ENCODE measurements at regions of chr17 and their contacts with region 1.

Region 1: DNA sequence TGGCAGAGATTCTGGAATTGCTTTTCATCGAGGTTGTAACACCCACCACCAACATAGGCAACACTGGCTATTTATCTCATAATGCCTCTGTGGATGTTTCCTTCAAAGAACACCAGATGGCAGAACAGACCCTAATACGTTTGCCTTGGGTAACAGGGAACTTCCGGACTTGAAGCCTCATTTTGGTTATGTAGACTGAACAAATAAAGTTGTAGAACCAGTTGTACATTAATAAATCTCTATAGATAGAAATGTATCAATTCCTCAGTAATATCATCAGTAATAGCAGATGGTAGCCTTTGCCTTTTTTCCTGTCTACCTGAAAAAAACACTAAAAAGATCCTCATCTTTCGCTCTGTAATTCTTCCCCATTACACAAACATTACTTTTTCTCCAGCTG is 25.9 kb upstream of the APOH start:
- DNase-seq: peak; percentile 56
- H3K4me3 Mint-ChIP-seq: peak overlapping the region; percentile 46
- H3K27ac Mint-ChIP-seq: peak overlapping the region; percentile 67
- H3K4me1 Mint-ChIP-seq: peaks cover 22% of the 10 kb centered on the region
- H3K27me3 Mint-ChIP-seq: no peaks in the 10 kb centered on the region

Region 2: DNA sequence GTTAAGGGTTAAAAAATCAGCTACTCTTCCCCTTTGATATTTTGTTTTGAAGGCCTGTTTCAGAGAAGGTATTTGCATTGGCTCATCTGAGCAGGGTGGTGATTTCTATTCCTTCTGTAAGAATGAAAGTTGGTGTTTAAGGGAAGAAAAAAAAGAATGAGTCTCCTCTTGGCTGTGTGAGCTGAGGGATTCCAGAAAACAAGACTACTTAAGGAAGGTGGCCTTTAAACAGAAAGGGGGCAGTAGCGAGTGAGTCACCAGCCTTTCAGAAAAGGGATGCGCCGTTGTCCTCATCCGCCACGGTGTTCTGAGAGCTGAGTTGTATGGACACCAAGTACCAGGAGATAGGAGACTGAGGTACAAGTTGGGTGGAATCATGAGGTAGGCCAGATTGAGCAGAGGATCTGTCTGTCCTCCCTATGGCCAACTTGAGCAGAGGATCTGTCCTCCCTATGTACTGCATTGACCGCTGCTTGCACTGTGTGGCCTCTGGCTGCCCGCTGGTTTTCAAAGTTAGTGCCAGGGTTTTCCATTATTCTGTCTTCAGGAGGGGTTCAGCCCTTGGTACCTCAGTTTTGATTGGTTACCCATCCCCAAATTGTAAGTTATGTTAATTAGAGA is 55.5 kb after region 1 on chr17:
- CTCF ChIA-PET with region 1: no interaction called
- intact Hi-C with region 1: loop called (anchors 1 kb)
- DNase-seq: peak; percentile 77
- H3K4me3 Mint-ChIP-seq: peak overlapping the region; percentile 25
- H3K27ac Mint-ChIP-seq: peak overlapping the region; percentile 94
- H3K4me1 Mint-ChIP-seq: peaks cover 90% of the 10 kb centered on the region
- H3K27me3 Mint-ChIP-seq: no peaks in the 10 kb centered on the region

Region 3: DNA sequence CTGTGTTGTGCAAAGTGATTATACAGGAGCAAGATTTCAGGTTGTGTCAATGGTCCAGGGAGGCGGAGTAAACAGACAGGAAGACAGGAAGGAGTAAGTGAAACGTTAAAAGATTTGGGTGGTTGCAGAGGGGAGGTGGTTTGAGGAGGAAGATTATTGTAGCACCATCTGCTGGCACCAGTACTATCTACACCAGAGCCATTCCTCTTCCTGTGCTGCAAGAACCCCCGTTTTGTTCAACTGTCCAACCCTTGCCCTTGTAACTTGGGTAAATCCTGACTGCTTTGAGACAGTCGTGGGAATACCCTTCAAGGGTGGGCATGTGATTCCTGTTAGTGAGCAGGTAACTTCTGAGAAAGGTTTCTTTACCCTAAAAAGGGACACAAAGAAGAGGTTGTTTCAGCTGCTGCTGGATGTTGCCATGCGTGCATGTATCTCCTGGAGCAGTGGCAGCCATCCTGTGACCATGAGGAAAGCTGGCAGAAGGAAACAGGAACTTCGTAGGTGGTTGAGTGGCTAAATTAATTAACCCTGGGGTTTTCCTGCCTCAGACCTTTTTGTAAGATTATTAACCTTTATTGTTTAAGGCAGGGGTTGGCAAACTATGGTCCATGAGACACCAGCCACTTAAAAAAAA is 171.4 kb after region 1 on chr17:
- CTCF ChIA-PET with region 1: interaction called, 5 read pairs
- intact Hi-C with region 1: loop called (anchors 1 kb)
- DNase-seq: peak; percentile 68
- H3K4me3 Mint-ChIP-seq: no peak overlapping the region
- H3K27ac Mint-ChIP-seq: peak overlapping the region; percentile 83
- H3K4me1 Mint-ChIP-seq: peaks cover 81% of the 10 kb centered on the region
- H3K27me3 Mint-ChIP-seq: no peaks in the 10 kb centered on the region

Region 4: GRCh38 chr17:66508896-66509843 is 254.1 kb after region 1 on chr17:
- CTCF ChIA-PET with region 1: no interaction called
- intact Hi-C with region 1: loop called (anchors 1 kb)
- DNase-seq: peak; percentile 79
- H3K4me3 Mint-ChIP-seq: peak overlapping the region; percentile 39
- H3K27ac Mint-ChIP-seq: peak overlapping the region; percentile 90
- H3K4me1 Mint-ChIP-seq: peaks cover 85% of the 10 kb centered on the region
- H3K27me3 Mint-ChIP-seq: no peaks in the 10 kb centered on the region

Region 5: GRCh38 chr17:66525338-66525737 is 270.2 kb after region 1 on chr17:
- CTCF ChIA-PET with region 1: no interaction called
- intact Hi-C with region 1: no loop called
- DNase-seq: no peak
- H3K4me3 Mint-ChIP-seq: no peak overlapping the region
- H3K27ac Mint-ChIP-seq: peak overlapping the region; percentile 11
- H3K4me1 Mint-ChIP-seq: peaks cover 69% of the 10 kb centered on the region
- H3K27me3 Mint-ChIP-seq: no peaks in the 10 kb centered on the region

Region 6: DNA sequence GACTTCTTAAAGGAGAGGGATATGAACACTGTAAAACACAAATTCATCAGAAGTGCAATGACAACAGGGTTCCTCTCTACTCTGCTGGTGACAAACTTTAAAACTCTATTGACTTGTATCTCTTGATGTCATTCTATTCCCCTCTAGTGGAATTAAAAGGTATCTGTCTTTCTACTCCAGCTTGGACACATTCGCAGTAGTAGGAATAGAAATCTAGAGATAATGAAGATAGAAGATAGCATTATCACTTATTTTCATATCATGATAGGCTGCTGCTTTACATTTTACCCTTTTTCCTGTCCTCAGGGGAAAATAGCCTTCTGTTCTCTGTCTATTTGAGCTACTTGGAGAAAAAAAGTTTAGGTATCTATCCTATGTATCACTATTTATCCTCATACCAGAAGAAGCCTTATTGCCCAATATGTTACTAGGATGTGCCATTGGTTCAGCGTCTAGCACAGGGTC is 370.2 kb after region 1 on chr17:
- CTCF ChIA-PET with region 1: no interaction called
- intact Hi-C with region 1: loop called (anchors 2 kb)
- DNase-seq: no peak
- H3K4me3 Mint-ChIP-seq: no peak overlapping the region
- H3K27ac Mint-ChIP-seq: no peak overlapping the region
- H3K4me1 Mint-ChIP-seq: peaks cover 47% of the 10 kb centered on the region
- H3K27me3 Mint-ChIP-seq: no peaks in the 10 kb centered on the region

Region 7: DNA sequence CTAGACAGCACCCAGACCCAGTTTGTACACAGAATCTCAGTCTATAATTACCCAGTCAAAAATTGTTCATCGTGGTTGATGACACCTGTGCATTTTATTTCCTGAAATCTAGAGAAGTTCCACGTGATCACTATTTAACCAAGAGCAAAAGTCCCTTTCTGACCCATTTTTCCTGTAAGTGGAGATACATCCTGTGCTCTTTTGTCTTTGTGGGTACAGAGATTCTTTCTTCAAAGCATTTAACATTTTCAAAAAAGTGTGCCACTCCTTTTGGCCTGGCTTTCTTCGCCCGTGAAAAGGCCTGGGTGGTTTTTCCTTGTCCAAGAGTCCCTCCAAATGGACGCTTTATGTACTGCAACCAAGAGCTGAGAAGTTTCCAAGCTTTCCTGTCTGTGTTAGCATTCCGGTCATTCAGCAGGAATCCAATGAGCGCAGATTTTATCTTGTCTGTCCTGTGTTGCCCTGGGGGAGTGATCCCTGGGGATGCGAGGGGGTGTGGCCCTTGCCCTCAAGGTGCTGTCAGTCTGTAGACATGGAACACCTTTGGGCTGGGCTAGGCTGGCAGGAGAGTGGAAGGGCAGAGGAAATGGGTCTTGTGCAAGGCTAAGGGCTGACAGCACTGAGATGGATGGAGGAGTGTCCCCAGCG is 418.7 kb after region 1 on chr17:
- CTCF ChIA-PET with region 1: no interaction called
- intact Hi-C with region 1: loop called (anchors 1 kb)
- DNase-seq: peak; percentile 72
- H3K4me3 Mint-ChIP-seq: peak overlapping the region; percentile 20
- H3K27ac Mint-ChIP-seq: peak overlapping the region; percentile 88
- H3K4me1 Mint-ChIP-seq: peaks cover 77% of the 10 kb centered on the region
- H3K27me3 Mint-ChIP-seq: no peaks in the 10 kb centered on the region

Region 8: GRCh38 chr17:66906321-66907278 is 651.5 kb after region 1 on chr17:
- CTCF ChIA-PET with region 1: no interaction called
- intact Hi-C with region 1: loop called (anchors 1 kb)
- DNase-seq: peak; percentile 85
- H3K4me3 Mint-ChIP-seq: no peak overlapping the region
- H3K27ac Mint-ChIP-seq: no peak overlapping the region
- H3K4me1 Mint-ChIP-seq: peaks cover 4% of the 10 kb centered on the region
- H3K27me3 Mint-ChIP-seq: no peaks in the 10 kb centered on the region